PC-3 (cell line): ENCODE measurements at regions of chr4 and their contacts with region 1.

Region 1: DNA sequence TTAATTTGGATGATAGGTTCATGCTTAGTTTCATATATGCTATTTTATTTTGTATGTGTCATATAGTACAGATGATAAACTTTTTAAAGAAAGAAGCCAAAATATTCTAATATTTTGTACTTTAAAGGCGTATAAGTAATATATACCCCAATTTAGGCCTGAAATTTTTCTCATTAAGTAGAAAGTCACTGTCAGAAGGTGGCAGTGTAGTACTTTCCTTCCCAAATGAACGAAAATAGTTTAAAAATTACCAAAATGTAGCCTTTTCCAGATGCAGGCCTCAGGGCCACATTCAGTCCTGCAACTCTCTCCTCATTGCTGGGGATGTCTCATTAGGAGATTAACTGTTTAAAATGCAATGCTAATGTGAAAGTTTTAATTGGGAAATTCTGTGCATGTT is 1263.6 kb downstream of the C4orf33 start:
- DNase-seq: peak; percentile 35
- ATAC-seq: no peak; the same call in 1 of the 2 replicates
- H3K4me3 ChIP-seq: no peak overlapping the region
- H3K27ac ChIP-seq: no peak overlapping the region
- H3K4me1 ChIP-seq: no peaks in the 10 kb centered on the region
- H3K27me3 ChIP-seq: no peaks in the 10 kb centered on the region
- CTCF ChIP-seq: peak; percentile 61

Region 2: DNA sequence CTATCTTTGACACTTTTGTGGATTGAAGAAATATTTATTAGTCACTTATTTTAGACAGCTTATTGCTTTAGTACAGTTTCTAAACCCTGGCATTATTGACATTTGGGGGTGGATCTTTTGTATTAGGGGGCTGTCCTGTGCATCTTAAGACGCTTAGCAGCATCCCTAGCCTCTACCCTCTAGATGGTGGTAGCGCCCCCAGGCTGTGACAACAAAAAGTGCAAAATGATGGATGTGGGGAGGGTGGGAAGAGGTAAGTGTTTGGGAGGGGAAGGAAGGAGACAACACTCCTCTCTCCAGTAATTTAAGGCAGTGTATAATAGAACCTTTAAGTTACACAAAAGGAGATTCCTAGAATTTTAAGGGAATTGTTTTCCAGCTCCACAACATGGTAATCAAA is 53.0 kb before region 1 on chr4:
- CTCF ChIA-PET with region 1: no interaction called
- POLR2A ChIA-PET with region 1: no interaction called
- intact Hi-C with region 1: no loop called
- DNase-seq: no peak
- ATAC-seq: no peak
- H3K4me3 ChIP-seq: no peak overlapping the region
- H3K27ac ChIP-seq: no peak overlapping the region
- H3K4me1 ChIP-seq: no peaks in the 10 kb centered on the region
- H3K27me3 ChIP-seq: no peaks in the 10 kb centered on the region
- CTCF ChIP-seq: 0 out of 2 replicates have a peak, but pooled peaks have one; percentile 29

Region 3: DNA sequence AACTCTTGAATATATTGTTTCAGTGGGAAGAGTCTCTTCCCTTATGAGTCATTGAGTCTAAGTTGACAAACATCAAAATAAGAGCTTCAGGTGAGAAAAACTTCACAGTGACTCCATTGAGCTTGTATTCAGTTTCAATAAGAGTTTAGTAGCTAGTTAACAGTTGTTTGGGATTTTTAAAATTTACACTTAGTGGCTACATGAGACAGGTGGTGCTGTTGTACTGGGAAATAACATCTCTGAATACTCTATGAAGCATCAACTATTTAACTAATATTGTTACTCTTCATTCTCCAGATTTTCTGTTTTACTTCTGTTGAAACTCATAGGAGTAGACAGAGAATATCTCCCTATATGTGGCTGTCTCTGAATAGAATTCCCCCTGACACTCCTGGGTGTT is 345.5 kb after region 1 on chr4:
- CTCF ChIA-PET with region 1: no interaction called
- POLR2A ChIA-PET with region 1: no interaction called
- intact Hi-C with region 1: loop called (anchors 10 kb)
- DNase-seq: peak; percentile 7
- ATAC-seq: peak; percentile 50
- H3K4me3 ChIP-seq: no peak overlapping the region
- H3K27ac ChIP-seq: no peak overlapping the region
- H3K4me1 ChIP-seq: no peaks in the 10 kb centered on the region
- H3K27me3 ChIP-seq: no peaks in the 10 kb centered on the region
- CTCF ChIP-seq: peak; percentile 37; the same call in 1 of the 2 replicates

Region 4: GRCh38 chr4:130808492-130808891 is 448.9 kb after region 1 on chr4:
- CTCF ChIA-PET with region 1: no interaction called
- POLR2A ChIA-PET with region 1: no interaction called
- intact Hi-C with region 1: loop called (anchors 1 kb)
- DNase-seq: peak; percentile 49
- ATAC-seq: peak; percentile 43; the same call in 1 of the 2 replicates
- H3K4me3 ChIP-seq: no peak overlapping the region
- H3K27ac ChIP-seq: no peak overlapping the region
- H3K4me1 ChIP-seq: no peaks in the 10 kb centered on the region
- H3K27me3 ChIP-seq: no peaks in the 10 kb centered on the region
- CTCF ChIP-seq: peak; percentile 66